ENCODE measurements at regions of chr18 and their contacts with region 1.

Region 1: GRCh38 chr18:80253871-80254492 is 6.7 kb upstream of the PARD6G start:
- DNase-seq: peak in 1 of 2 experiments; percentile 23
- ATAC-seq: peak; percentile 20 to 71; a peak in 3 of 6 replicates
- H3K4me3 ChIP-seq: no peak overlapping the region
- H3K27ac ChIP-seq: no peak overlapping the region
- H3K4me1 ChIP-seq: no peaks in the 10 kb centered on the region
- CTCF ChIP-seq: no peak
- EP300 ChIP-seq: no peak
- POLR2A ChIP-seq: no peak
- RAD21 ChIP-seq: no peak

Region 2: GRCh38 chr18:79866889-79867574 is 386.9 kb before region 1 on chr18:
- CTCF ChIA-PET with region 1: no interaction called
- POLR2A ChIA-PET with region 1: no interaction called
- DNase-seq: peak in 1 of 2 experiments; percentile 49
- ATAC-seq: peak in 1 of 2 experiments; percentile 54; a peak in 2 of 6 replicates
- H3K4me3 ChIP-seq: no peak overlapping the region
- H3K27ac ChIP-seq: no peak overlapping the region
- H3K4me1 ChIP-seq: no peaks in the 10 kb centered on the region
- CTCF ChIP-seq: no peak
- EP300 ChIP-seq: no peak
- POLR2A ChIP-seq: no peak
- RAD21 ChIP-seq: no peak

Region 3: GRCh38 chr18:80077873-80078272 is 176.1 kb before region 1 on chr18:
- CTCF ChIA-PET with region 1: no interaction called
- POLR2A ChIA-PET with region 1: no interaction called
- DNase-seq: no peak
- ATAC-seq: no peak
- H3K4me3 ChIP-seq: no peak overlapping the region
- H3K27ac ChIP-seq: no peak overlapping the region
- H3K4me1 ChIP-seq: no peaks in the 10 kb centered on the region
- CTCF ChIP-seq: no peak
- EP300 ChIP-seq: no peak
- POLR2A ChIP-seq: no peak
- RAD21 ChIP-seq: no peak

Region 4: GRCh38 chr18:80157708-80158343 is 96.2 kb before region 1 on chr18:
- CTCF ChIA-PET with region 1: interaction called, 20 read pairs
- POLR2A ChIA-PET with region 1: no interaction called
- DNase-seq: peak; percentile 21 to 75
- ATAC-seq: peak; percentile 69 to 83; a peak in 4 of 6 replicates
- H3K4me3 ChIP-seq: no peak overlapping the region
- H3K27ac ChIP-seq: no peak overlapping the region
- H3K4me1 ChIP-seq: no peaks in the 10 kb centered on the region
- CTCF ChIP-seq: peak; percentile 73
- EP300 ChIP-seq: no peak
- POLR2A ChIP-seq: no peak
- RAD21 ChIP-seq: peak; percentile 67 to 71

Region 5: DNA sequence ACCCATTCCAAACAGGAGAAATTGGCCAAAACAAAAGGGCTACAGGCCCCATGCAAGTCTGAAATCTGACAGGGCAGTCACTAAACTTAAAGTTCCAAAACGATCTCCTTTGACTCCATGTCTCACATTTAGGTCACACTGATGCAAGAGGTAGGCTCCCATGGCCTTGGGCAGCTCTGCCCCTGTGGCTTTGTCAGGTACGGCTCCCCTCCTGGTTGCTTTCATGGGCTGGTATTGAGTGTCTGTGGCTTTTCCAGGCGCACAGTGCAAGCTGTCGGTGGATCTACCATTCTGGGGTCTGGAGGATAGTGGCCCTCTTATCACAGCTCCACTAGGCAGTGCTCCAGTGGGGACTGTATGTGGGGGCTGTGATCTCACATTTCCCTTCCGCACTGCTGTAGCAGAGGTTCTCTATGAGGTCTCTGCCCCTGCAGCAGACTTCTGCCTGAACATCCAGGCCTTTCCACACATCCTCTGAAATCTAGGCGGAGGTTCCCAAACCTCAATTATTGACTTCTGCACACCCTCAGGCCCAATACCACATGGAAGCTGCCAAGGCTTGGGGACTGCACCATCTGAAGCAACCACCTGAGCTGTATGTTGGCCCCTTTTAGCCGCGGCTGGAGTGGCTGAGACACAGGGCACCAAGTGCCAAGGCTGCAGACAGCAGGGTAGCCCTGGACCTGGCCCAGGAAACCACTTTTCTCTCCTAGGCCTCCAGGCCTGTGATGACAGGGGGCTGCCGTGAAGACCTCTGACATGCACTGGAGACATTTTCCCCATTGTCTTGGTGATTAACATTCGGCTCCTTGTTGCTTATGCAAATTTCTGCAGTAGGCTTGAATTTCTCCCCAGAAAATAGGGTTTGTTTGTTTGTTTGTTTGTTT is 35.4 kb before region 1 on chr18:
- CTCF ChIA-PET with region 1: no interaction called
- POLR2A ChIA-PET with region 1: no interaction called
- DNase-seq: no peak
- ATAC-seq: no peak
- H3K4me3 ChIP-seq: no peak overlapping the region
- H3K27ac ChIP-seq: no peak overlapping the region
- H3K4me1 ChIP-seq: no peaks in the 10 kb centered on the region
- CTCF ChIP-seq: no peak
- EP300 ChIP-seq: no peak
- POLR2A ChIP-seq: no peak
- RAD21 ChIP-seq: no peak

Measured in A549 (cell line).